Mammary epithelial cell (primary cell): ENCODE measurements at regions of chr19 and their contacts with region 1.

Region 1: DNA sequence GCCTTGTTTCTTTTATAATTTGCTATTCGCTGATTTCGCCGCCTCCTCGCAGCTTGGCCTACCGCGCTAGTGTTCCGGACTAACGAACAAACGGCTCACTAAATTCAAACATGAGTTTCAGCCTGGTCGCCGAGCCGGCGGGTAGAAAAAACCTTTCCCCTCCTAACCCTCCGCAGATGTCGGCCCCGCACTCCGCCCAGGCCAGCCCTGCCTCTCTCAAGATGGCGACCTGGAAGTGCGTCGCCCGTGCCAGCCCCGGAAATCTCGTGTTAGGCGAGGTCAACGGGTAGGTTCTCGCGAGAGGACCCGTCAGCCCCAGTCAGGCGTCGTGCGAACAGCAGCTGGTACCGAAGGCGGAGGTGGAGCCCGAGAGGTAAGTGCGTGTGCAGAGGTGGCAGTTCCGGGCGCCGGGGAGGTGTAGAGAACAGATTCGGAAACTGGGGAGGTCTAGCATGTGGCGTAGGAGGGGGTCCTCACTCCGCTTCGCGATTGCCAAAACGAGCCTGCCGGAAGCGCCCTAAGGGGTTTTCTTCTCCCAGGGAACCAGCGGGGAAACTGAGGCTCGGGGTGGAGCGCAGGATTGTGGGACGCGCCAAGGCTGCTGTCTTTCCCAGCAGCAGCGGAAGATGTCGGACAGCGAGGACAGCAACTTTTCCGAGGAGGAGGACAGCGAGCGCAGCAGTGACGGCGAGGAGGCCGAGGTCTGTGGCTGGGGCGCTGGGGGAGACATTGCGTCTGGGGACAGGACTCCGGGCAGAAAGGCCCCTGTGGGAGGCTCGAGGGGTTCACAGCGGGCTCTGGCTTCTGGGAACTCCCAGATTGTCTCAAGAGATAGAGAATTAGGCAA is at the start of gene SUPT5H:
- DNase-seq: peak; percentile 97
- H3K4me3 ChIP-seq: peak within 1 kb of the TSS; percentile 78 to 93 (median 90)
- H3K27ac ChIP-seq: peak within 1 kb of the TSS; percentile 81
- H3K4me1 ChIP-seq: peaks cover 27% of the 10 kb centered on the region
- H3K27me3 ChIP-seq: no peaks in the 10 kb centered on the region
- CTCF ChIP-seq: no peak
- total RNA-seq, gene SUPT5H: 66.7 to 120 TPM

Region 2: DNA sequence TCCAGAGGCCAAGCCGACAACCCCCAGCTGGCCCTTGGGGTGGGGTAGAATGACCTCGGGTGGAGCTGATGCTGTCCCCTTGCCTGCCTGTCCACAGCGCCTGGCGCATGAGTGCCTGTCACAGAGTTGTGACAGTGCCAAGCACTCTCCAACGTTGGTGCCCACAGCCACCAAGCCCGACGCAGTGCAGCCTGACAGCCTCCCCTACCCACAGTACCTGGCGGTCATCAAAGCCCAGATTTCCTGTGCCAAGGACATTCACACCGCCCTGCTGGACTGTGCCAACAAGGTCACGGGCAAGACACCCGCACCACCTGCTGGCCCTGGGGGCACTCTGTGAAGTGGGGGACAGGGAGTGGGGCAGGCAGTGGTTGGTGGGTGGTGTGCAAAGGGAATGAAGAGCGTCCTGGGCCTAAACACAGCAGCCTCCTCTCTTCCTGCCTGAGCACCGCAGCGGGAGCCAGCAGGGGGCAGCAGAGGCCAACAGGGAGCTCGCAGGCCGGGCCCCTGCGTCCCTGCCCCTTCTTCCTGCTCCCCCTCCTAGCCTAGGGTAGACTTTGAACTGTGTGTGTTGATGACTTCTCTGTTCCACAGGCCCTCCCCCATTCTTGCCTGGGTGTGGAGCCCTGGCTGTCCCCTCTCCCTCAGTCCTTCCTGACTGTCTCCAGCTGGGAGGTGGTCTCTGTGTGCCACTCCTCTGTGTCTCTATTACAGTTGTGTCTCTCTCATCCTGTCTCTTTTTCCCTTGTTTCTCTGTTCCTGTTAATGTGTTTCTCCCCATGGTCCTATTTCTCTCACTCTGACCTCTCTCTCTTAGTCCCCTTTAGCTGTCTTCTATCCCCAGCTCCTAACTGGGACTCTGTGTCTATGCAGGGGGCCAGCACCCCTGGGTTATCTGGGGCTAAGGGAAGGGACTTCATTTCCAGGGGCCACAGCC is 47.9 kb before region 1 on chr19:
- CTCF ChIA-PET with region 1: no interaction called
- dilution Hi-C with region 1: no loop called
- in situ Hi-C with region 1: no loop called
- intact Hi-C with region 1: loop called (anchors 2 kb)
- DNase-seq: peak; percentile 75
- H3K4me3 ChIP-seq: no peak overlapping the region
- H3K27ac ChIP-seq: peak overlapping the region; percentile 97
- H3K4me1 ChIP-seq: peaks cover 32% of the 10 kb centered on the region
- H3K27me3 ChIP-seq: no peaks in the 10 kb centered on the region
- CTCF ChIP-seq: peak; percentile 97 to 99

Region 3: DNA sequence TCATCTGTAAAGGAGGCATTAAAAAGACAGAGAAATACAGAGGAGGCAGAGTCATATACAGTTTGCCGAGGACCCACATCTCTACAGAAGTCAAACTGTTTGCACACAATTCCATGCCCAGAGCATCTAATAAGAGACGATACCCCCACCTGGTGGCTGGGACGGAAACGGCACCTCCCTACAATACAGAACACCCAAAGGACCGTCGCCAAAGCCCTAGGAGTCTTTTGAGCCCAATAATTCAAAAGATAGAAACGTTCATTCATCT is 33.7 kb before region 1 on chr19:
- CTCF ChIA-PET with region 1: no interaction called
- dilution Hi-C with region 1: no loop called
- in situ Hi-C with region 1: no loop called
- intact Hi-C with region 1: no loop called
- DNase-seq: peak; percentile 88
- H3K4me3 ChIP-seq: peak overlapping the region in 1 of 3 experiments; percentile 16
- H3K27ac ChIP-seq: peak overlapping the region; percentile 97
- H3K4me1 ChIP-seq: peaks cover 38% of the 10 kb centered on the region
- H3K27me3 ChIP-seq: no peaks in the 10 kb centered on the region
- CTCF ChIP-seq: peak; percentile 88 to 90

Region 4: GRCh38 chr19:39502640-39503417 is 57.3 kb after region 1 on chr19:
- CTCF ChIA-PET with region 1: no interaction called
- dilution Hi-C with region 1: loop called (anchors 5 kb)
- in situ Hi-C with region 1: no loop called
- intact Hi-C with region 1: loop called (anchors 2 kb)
- DNase-seq: peak; percentile 53
- H3K4me3 ChIP-seq: no peak overlapping the region
- H3K27ac ChIP-seq: no peak overlapping the region
- H3K4me1 ChIP-seq: peaks cover 16% of the 10 kb centered on the region
- H3K27me3 ChIP-seq: peaks cover 16% of the 10 kb centered on the region
- CTCF ChIP-seq: peak; percentile 61 to 67

Region 5: GRCh38 chr19:39546599-39546998 is 101.1 kb after region 1 on chr19:
- CTCF ChIA-PET with region 1: interaction called, 4 read pairs
- dilution Hi-C with region 1: loop called (anchors 5 kb)
- in situ Hi-C with region 1: no loop called
- intact Hi-C with region 1: no loop called
- DNase-seq: peak; percentile 21
- H3K4me3 ChIP-seq: no peak overlapping the region
- H3K27ac ChIP-seq: no peak overlapping the region
- H3K4me1 ChIP-seq: peaks cover 25% of the 10 kb centered on the region
- H3K27me3 ChIP-seq: no peaks in the 10 kb centered on the region
- CTCF ChIP-seq: no peak

Region 6: DNA sequence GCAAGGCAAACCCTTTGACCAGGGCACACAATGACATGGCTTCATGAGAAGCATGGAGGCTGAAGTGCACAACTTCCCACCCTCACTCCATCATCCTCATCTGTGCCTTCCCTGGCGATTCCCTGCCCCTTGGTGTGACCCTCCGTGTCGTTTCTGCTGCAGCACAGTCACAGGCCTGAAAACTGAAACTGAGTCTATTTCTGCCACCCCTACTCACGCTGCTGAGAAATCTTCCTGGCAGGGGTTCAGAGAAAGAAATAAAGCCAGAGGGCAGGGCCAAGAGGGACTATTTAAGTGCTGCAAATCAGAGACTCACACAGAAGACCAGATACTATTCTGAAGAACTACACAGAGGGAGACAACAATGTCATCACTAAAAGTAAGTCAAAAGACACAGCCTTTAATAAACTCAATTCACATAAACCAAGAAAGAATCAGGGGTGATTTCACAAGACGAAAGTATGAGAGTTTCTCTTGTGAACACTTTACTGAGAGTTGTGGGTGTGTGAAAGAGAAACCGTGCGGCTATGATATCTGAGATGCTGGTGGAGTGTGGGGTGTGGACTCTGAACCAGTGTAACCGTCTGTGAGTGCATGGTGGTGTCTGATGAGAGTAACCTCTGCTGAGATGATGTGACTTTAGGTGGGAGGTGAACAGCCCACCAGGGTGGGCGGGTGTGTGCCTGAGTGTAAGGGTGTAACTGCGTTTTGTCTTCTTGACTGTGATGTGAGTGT is 233.7 kb after region 1 on chr19:
- CTCF ChIA-PET with region 1: no interaction called
- dilution Hi-C with region 1: no loop called
- in situ Hi-C with region 1: loop called in 1 of 2 experiments (anchors 25 kb)
- intact Hi-C with region 1: no loop called
- DNase-seq: no peak
- H3K4me3 ChIP-seq: no peak overlapping the region
- H3K27ac ChIP-seq: no peak overlapping the region
- H3K4me1 ChIP-seq: no peaks in the 10 kb centered on the region
- H3K27me3 ChIP-seq: no peaks in the 10 kb centered on the region
- CTCF ChIP-seq: no peak